CD8-positive, alpha-beta memory T cell (primary cell): ENCODE measurements at regions of chr19 and their contacts with region 1.

Region 1: GRCh38 chr19:10142701-10143375 is 23.1 kb upstream of the EIF3G start:
- DNase-seq: peak; percentile 23 to 72 (median 67)
- H3K4me3 ChIP-seq: peak overlapping the region; percentile 49
- H3K4me3 Mint-ChIP-seq: peak overlapping the region; percentile 31 to 88 (median 80)
- H3K27ac ChIP-seq: peak overlapping the region; percentile 71
- H3K27ac Mint-ChIP-seq: peak overlapping the region; percentile 95 to 100 (median 98)
- H3K4me1 ChIP-seq: peaks cover 61% of the 10 kb centered on the region
- H3K4me1 Mint-ChIP-seq: peaks cover 31 to 62% (median 48%) of the 10 kb centered on the region in 3 donors
- H3K27me3 ChIP-seq: no peaks in the 10 kb centered on the region
- H3K27me3 Mint-ChIP-seq: no peaks in the 10 kb centered on the region

Region 2: DNA sequence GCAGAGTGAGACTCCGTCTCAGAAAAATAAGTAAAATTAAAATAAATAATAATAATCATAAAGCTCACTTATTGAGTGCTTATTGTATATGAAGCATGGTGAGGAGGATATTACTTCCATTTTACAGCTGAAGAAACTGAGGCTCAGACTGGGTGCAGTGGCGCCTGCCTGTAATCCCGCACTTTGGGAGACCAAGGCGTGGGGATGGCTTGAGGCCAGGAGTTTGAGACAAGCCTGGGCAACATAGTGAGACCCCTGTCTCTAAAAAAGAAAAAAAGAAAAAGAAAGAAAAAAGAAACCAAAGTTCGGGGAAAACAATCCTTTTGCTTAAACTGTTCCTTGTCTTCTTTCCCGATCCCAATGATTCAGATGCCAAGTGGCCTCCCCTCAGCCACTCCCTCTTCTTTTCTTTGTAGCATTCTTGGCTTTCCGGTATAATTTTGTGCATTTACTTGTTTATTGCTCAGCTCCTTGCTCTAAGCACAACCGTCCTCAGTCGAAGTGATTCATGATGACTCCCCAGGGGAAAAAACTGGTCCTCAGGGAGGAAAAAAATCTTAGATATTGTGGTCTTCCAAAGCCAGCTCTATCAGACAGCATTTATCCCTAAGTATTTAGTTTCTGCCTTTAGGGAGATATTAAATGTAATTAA is 22.2 kb before region 1 on chr19:
- CTCF ChIA-PET with region 1: interaction called, 27 read pairs
- POLR2A ChIA-PET with region 1: interaction called, 16 read pairs
- DNase-seq: no peak
- H3K4me3 ChIP-seq: no peak overlapping the region
- H3K4me3 Mint-ChIP-seq: peak overlapping the region in 4 of 7 donors; percentile 29 to 78 (median 52)
- H3K27ac ChIP-seq: no peak overlapping the region
- H3K27ac Mint-ChIP-seq: peak overlapping the region in 1 of 8 donors; percentile 50
- H3K4me1 ChIP-seq: peaks cover 27% of the 10 kb centered on the region
- H3K4me1 Mint-ChIP-seq: peaks cover 11 to 32% (median 20%) of the 10 kb centered on the region in 3 donors
- H3K27me3 ChIP-seq: no peaks in the 10 kb centered on the region
- H3K27me3 Mint-ChIP-seq: no peaks in the 10 kb centered on the region

Region 3: DNA sequence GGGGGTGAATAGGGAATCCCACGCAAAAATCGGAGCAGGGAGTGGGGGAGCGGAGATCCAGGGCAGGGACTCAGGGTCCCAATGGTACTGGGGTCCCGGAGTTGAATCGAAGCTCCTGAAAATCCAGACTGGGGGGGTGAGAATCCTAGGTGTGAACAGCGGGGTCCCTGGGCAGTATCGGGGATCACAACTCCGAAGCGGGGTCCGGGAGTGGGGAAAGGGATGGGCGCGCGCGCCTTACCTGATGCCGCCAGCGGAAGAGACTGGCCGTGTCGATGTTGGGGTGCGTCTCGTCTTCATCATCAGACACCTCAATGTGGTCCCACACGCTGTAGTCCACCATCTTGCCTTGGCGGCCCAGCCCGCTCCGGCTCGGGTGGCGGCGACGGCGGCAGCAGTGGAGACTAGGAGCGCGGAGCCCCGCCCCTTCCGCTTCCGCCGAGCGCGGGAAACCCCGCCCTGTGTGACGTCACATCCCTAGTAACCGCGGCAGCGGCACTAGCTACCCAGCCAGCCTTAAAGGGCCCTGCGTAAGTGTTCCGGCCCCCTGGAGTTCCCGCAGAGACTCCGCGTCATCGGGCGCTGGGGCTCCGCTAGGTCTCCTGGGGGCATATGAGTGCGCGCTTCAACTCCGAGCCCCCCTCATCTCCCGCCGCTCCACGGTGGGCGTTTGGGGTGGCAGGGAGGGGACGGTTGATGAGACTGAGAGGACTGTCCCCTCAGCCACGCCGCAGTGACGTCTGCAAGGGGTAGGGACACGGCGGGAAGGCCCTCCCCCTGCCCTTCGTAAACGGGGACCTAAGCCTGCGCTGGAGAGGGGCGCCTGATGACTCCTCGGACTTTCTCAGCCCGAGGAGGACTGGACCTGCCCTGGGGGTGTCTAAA is 260.5 kb after region 1 on chr19 and contains the start of gene CDC37:
- CTCF ChIA-PET with region 1: no interaction called
- POLR2A ChIA-PET with region 1: no interaction called
- DNase-seq: peak; percentile 96 to 98 (median 97)
- H3K4me3 ChIP-seq: peak within 1 kb of the TSS; percentile 99
- H3K4me3 Mint-ChIP-seq: peak within 1 kb of the TSS; percentile 88 to 99 (median 96)
- H3K27ac ChIP-seq: peak within 1 kb of the TSS; percentile 98
- H3K27ac Mint-ChIP-seq: peak within 1 kb of the TSS; percentile 97 to 100 (median 99)
- H3K4me1 ChIP-seq: peaks cover 69% of the 10 kb centered on the region
- H3K4me1 Mint-ChIP-seq: peaks cover 60 to 84% (median 70%) of the 10 kb centered on the region in 3 donors
- H3K27me3 ChIP-seq: no peaks in the 10 kb centered on the region
- H3K27me3 Mint-ChIP-seq: peaks cover 0 to 11% of the 10 kb centered on the region in 2 donors
- total RNA-seq, gene CDC37: 273 to 277 TPM